PC-3 (cell line): ENCODE measurements at regions of chr11 and their contacts with region 1.

Region 1: GRCh38 chr11:124586238-124586860 is 16.6 kb downstream of the OR8A1 start:
- DNase-seq: peak; percentile 84
- ATAC-seq: peak; percentile 70
- H3K4me3 ChIP-seq: no peak overlapping the region
- H3K27ac ChIP-seq: no peak overlapping the region
- H3K4me1 ChIP-seq: no peaks in the 10 kb centered on the region
- H3K27me3 ChIP-seq: peaks cover 81% of the 10 kb centered on the region
- CTCF ChIP-seq: peak; percentile 80

Region 2: GRCh38 chr11:124402326-124402922 is 183.9 kb before region 1 on chr11:
- CTCF ChIA-PET with region 1: interaction called, 4 read pairs
- POLR2A ChIA-PET with region 1: no interaction called
- intact Hi-C with region 1: loop called (anchors 1 kb)
- DNase-seq: peak; percentile 95
- ATAC-seq: peak; percentile 98
- H3K4me3 ChIP-seq: no peak overlapping the region
- H3K27ac ChIP-seq: no peak overlapping the region
- H3K4me1 ChIP-seq: no peaks in the 10 kb centered on the region; the same call in 1 of the 2 replicates
- H3K27me3 ChIP-seq: peaks cover 29% of the 10 kb centered on the region
- CTCF ChIP-seq: peak; percentile 92

Region 3: DNA sequence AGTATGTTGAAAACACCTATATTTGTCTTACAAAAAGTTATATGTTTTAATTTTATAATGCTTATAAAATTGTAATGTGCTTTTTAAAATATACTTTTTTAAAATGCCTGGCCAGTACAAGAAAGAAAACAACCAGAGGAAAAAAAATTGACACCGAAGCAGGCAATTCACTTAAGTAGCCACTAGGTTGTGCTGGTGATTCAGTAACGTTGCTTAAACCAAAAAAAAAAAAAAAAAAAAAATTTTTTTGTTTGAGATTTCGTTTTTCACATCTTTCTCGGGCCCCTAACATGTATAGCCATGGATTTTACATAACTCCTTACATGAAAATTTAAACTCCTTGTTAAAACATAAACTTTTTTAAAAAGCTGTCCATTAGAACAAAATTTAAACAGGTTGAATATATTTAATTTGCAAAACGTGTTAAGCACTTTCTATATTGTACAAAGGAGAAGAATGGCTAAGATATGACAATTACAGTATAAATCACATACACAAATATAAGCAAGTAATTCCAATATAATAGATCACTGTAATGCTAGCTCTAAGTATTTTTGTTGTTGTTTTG is 170.9 kb before region 1 on chr11:
- CTCF ChIA-PET with region 1: no interaction called
- POLR2A ChIA-PET with region 1: no interaction called
- intact Hi-C with region 1: loop called (anchors 1 kb)
- DNase-seq: peak; percentile 69
- ATAC-seq: no peak
- H3K4me3 ChIP-seq: no peak overlapping the region
- H3K27ac ChIP-seq: no peak overlapping the region
- H3K4me1 ChIP-seq: no peaks in the 10 kb centered on the region
- H3K27me3 ChIP-seq: peaks cover 78% of the 10 kb centered on the region
- CTCF ChIP-seq: peak; percentile 73

Region 4: GRCh38 chr11:124837491-124837856 is 251.1 kb after region 1 on chr11:
- CTCF ChIA-PET with region 1: no interaction called
- POLR2A ChIA-PET with region 1: no interaction called
- intact Hi-C with region 1: no loop called
- DNase-seq: peak; percentile 93
- ATAC-seq: peak; percentile 21
- H3K4me3 ChIP-seq: peak overlapping the region; percentile 20
- H3K27ac ChIP-seq: no peak overlapping the region
- H3K4me1 ChIP-seq: peaks cover 58% of the 10 kb centered on the region
- H3K27me3 ChIP-seq: peaks cover 36% of the 10 kb centered on the region
- CTCF ChIP-seq: peak; percentile 69